GM18951 (cell line): ENCODE measurements at regions of chr19 and their contacts with region 1.

Region 1: DNA sequence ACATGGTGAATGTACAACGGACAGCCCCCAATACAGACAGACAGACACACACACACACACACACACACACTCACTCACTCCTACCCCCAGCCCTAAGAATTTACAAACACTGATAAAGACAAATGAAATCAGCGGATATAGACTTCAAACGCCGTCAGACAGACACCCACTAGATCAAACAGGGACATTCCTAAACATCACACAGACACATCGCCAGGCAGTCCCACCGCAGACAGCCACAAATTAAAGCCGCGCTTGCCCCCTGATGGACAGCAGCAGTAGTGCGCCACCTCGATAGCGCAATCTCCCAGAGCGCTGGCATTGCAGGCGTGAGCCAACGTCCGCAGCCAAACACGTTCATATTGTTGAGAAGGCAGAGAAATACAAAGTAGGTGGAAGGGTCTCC is 24.7 kb upstream of the ADGRE1 start:
- POLR2A ChIP-seq: peak; percentile 31

Region 2: DNA sequence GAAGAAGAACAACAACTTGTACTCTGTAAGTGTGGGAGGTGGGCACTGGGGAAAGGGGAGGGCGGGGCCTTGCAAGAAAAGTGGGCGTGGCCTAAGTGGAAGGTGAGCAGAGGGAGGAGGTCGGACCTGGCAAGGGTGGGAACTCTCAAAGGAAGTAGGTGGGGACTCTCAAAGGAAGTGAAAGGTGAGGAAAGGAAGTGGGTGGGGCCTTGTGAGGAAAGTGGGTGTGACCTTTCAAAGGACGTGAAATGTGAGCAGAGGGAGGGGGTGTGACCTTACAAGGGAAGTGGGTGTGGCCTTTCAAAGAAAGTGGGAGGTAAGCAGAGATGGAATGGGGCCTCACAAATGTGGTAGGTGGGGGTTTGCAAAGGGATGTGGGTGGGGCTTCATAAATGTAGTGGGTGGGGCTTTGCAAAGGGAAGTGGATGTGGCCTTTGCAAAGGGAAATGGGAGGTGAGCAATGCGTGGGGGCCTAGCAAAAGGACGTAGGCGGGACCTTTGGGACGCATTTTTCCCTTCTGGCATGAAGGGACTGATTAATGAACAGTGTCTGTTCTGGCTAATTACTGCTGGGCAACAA is 701.3 kb before region 1 on chr19:
- in situ Hi-C with region 1: loop called (anchors 25 kb)
- POLR2A ChIP-seq: no peak

Region 3: DNA sequence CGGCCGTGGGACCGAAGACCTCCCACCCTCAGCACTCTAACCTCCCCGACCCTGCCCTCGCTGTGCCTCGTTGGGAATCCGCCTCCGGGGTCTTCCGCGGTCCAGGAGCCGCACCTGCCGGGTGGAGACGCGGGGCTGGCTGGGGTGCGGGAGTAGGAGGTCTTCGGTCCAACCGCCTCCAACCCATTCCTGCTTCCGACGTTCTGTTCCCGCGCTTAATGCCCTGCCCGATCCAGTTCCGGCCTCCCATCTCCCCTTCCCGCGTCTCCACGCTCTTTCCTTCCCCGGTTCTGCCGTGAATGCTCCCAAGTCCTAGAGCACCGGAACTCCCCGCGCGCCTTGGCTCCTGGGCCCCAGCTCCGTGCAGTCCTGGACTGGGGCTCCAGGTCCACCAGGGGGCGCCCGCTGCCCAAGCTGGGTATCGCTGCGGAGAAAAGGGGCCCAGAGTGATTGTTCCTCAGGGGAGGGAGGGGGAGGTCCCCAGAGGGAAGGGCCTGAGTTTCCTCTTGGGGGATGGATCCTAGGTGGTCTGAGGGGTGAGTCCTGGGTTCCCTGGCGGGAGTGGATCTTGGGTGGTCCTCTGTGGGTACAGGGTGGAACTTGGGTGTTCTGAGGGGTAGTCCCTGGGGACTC is 345.9 kb before region 1 on chr19:
- in situ Hi-C with region 1: loop called (anchors 25 kb)
- POLR2A ChIP-seq: no peak

Region 4: GRCh38 chr19:6632002-6632621 is 230.6 kb before region 1 on chr19:
- in situ Hi-C with region 1: loop called (anchors 25 kb)
- POLR2A ChIP-seq: no peak

Region 5: DNA sequence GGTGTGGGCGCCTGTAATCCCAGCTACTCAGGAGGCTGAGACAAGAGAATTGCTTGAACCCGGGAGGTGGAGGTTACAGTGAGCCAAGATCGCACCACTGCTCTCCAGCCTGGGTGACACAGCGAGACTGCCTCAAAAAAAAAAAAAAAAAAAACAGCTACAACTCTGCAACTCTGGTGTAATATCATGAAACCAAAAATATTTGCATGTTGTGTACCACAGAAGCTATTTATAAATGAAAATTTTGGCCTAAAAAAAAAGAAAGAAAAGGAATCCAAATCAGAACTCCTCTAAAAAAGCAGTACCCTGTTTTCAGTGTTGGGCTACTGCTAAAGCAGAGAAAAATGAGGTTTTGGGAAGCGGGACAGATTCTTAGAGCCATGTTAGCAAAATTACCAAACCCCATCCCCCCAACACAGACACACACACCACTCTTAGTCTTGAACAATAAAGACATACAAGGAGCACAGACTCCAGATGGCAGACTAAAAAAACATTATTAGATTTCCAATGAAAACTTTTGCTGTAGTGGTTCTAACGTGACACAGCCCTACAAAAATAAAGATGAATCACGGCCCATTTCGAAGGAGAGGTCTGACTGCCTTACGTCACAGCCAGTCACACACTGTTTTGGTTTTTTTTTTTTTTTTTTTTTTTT is 380.1 kb after region 1 on chr19:
- in situ Hi-C with region 1: no loop called
- POLR2A ChIP-seq: no peak